CD4-positive, alpha-beta T cell (primary cell): ENCODE measurements at regions of chr14 and their contacts with region 1.

Region 1: GRCh38 chr14:92783816-92784431 is 10.2 kb upstream of the GOLGA5 start:
- DNase-seq: peak in 5 of 14 experiments; percentile 14 to 67 (median 63)
- ATAC-seq: peak; percentile 85
- H3K4me3 ChIP-seq: no peak overlapping the region
- H3K4me3 Mint-ChIP-seq: no peak overlapping the region
- H3K27ac ChIP-seq: no peak overlapping the region
- H3K27ac Mint-ChIP-seq: no peak overlapping the region
- H3K4me1 ChIP-seq: no peaks in the 10 kb centered on the region
- H3K4me1 Mint-ChIP-seq: no peaks in the 10 kb centered on the region
- H3K27me3 ChIP-seq: no peaks in the 10 kb centered on the region
- H3K27me3 Mint-ChIP-seq: no peaks in the 10 kb centered on the region
- CTCF ChIP-seq: peak; percentile 77

Region 2: GRCh38 chr14:92717571-92718042 is 66.3 kb before region 1 on chr14:
- CTCF ChIA-PET with region 1: interaction called, 7 read pairs
- POLR2A ChIA-PET with region 1: no interaction called
- intact Hi-C with region 1: loop called in 1 of 2 experiments (anchors 1 kb)
- DNase-seq: no peak
- ATAC-seq: no peak
- H3K4me3 ChIP-seq: no peak overlapping the region
- H3K4me3 Mint-ChIP-seq: no peak overlapping the region
- H3K27ac ChIP-seq: no peak overlapping the region
- H3K27ac Mint-ChIP-seq: no peak overlapping the region
- H3K4me1 ChIP-seq: no peaks in the 10 kb centered on the region
- H3K4me1 Mint-ChIP-seq: peaks cover 5% of the 10 kb centered on the region
- H3K27me3 ChIP-seq: no peaks in the 10 kb centered on the region
- H3K27me3 Mint-ChIP-seq: no peaks in the 10 kb centered on the region
- CTCF ChIP-seq: no peak

Region 3: GRCh38 chr14:92748259-92749016 is 35.5 kb before region 1 on chr14 and contains the start of gene LGMN:
- CTCF ChIA-PET with region 1: no interaction called
- POLR2A ChIA-PET with region 1: no interaction called
- intact Hi-C with region 1: loop called in 1 of 2 experiments (anchors 5 kb)
- DNase-seq: peak; percentile 73 to 91 (median 84)
- ATAC-seq: peak; percentile 98
- H3K4me3 ChIP-seq: peak within 1 kb of the TSS; percentile 70
- H3K4me3 Mint-ChIP-seq: peak within 1 kb of the TSS; percentile 93
- H3K27ac ChIP-seq: peak within 1 kb of the TSS in 1 of 2 donors; percentile 35
- H3K27ac Mint-ChIP-seq: peak within 1 kb of the TSS; percentile 73
- H3K4me1 ChIP-seq: peaks cover 26% of the 10 kb centered on the region
- H3K4me1 Mint-ChIP-seq: peaks cover 48% of the 10 kb centered on the region
- H3K27me3 ChIP-seq: no peaks in the 10 kb centered on the region
- H3K27me3 Mint-ChIP-seq: peaks cover 7% of the 10 kb centered on the region
- CTCF ChIP-seq: no peak
- total RNA-seq, gene LGMN: 4.5 to 4.9 TPM